ENCODE measurements at regions of chr5 and their contacts with region 1.

Region 1: DNA sequence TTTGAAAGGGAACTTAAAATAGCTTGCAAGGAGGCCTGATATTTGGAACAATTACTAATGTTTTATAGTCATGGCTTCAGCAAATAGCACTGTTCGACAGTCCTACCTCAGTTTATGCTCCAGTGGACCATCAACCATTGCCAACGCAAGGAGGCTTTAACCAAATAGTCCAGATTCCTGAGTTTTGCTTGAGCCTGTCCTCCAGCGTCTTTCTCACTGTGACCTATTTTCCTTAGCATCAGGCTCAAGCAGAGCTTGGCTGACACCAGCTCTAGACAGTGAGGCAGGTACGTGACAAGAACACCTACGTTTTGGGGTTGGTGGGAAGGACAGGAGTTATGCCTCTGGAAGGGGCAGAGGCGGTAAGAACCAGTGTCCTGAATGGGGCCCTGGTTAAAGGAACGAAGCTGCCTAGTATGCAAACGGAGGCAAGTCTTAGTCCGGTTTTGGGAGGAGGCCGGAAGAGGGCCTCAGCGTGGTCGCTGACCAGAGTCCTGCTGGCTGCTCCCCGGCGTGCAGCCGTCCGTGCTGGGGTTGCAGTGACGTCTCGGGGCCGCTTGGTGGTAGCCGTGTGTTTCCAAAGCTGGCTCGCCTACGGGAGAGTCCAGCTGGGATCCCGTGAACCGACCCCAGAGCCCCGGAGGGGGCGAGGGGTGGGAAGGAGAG is 998 bp upstream of the FGF18 start:
- DNase-seq: peak; percentile 42
- ATAC-seq: peak; percentile 67
- H3K4me3 Mint-ChIP-seq: peak overlapping the region; percentile 71
- H3K27ac Mint-ChIP-seq: no peak overlapping the region
- H3K4me1 Mint-ChIP-seq: peaks cover 20% of the 10 kb centered on the region
- H3K27me3 Mint-ChIP-seq: peaks cover 20% of the 10 kb centered on the region
- CTCF ChIP-seq: peak; percentile 49

Region 2: DNA sequence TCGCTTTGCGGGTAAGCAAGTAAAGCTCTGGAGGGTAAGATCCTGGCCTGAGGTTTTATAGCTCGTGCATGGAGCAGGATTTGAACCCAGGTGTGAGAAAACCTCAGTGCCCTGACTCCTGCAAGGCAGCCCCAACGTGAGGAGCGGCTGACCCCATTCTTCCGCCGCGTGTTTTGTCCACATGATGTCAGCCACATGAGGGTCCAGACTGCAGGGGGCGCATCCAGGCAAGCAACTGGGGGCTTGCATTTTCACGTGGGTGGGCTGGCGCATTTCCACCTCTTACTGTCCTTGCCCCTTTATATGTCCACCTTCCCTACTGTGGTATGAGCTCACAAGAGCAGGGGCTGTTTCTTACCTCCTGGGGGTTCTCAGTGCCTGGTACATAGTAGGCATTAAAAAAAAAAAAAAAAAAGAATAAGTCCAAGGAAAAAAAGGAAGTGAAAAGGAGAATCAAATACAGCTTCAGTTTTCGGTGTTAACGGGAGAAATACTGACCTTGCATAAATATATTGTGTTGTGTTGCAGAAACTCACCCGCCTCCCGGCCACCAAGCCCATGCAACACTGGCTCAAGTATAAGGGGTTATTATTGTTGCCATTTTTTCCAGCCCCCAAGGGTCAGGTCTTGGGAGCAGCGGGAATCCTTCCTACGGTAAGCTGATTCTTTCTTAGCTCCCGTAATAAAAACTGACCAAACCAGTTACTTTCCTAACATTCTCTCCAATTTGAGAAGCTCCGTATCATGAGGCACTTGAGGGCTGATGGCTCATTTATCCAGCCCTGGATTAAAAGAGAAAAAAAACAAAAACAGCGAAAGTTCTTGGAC is 94.4 kb before region 1 on chr5:
- CTCF ChIA-PET with region 1: no interaction called
- POLR2A ChIA-PET with region 1: no interaction called
- intact Hi-C with region 1: no loop called
- DNase-seq: no peak
- ATAC-seq: no peak
- H3K4me3 Mint-ChIP-seq: no peak overlapping the region
- H3K27ac Mint-ChIP-seq: no peak overlapping the region
- H3K4me1 Mint-ChIP-seq: no peaks in the 10 kb centered on the region
- H3K27me3 Mint-ChIP-seq: peaks cover 52% of the 10 kb centered on the region
- CTCF ChIP-seq: no peak

Region 3: DNA sequence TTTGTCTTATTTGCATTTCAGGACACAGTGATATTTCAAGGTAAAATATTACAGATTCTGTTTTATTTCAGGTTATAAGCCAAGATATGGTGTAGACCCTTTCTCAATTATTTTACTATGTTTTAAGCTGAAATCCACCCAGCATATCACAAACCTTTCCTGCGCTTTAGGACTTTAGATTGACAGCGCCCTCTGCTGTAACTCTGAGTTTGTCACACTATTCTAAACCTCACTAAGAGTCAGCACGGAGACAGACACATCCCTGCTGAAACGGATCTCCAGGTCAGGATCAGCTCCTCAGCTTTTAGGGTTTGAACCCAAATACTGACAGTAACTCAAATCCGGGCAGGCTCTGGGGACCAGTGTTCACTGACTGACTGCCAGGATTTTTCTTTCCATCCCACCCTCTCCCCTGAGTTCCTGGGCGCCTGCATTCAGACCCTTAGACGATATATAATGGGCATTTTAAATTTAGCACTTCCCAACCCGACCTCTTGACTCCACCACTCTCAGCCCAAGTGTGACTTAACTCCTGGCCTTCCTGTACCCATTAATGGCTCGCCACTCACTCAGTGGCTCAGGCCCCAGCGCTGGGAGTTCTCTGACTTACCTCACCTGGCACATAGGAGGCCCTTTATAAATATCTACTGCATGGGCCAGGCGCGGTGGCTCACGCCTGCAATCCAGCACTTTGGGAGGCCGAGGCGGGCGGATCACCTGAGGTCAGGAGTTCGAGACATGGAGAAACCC is 75.9 kb before region 1 on chr5:
- CTCF ChIA-PET with region 1: no interaction called
- POLR2A ChIA-PET with region 1: no interaction called
- intact Hi-C with region 1: no loop called
- DNase-seq: no peak
- ATAC-seq: no peak
- H3K4me3 Mint-ChIP-seq: no peak overlapping the region
- H3K27ac Mint-ChIP-seq: no peak overlapping the region
- H3K4me1 Mint-ChIP-seq: no peaks in the 10 kb centered on the region
- H3K27me3 Mint-ChIP-seq: peaks cover 13% of the 10 kb centered on the region
- CTCF ChIP-seq: no peak

Region 4: GRCh38 chr5:171445644-171446516 is 27.4 kb after region 1 on chr5:
- CTCF ChIA-PET with region 1: no interaction called
- POLR2A ChIA-PET with region 1: no interaction called
- intact Hi-C with region 1: no loop called
- DNase-seq: no peak
- ATAC-seq: no peak
- H3K4me3 Mint-ChIP-seq: no peak overlapping the region
- H3K27ac Mint-ChIP-seq: no peak overlapping the region
- H3K4me1 Mint-ChIP-seq: no peaks in the 10 kb centered on the region
- H3K27me3 Mint-ChIP-seq: peaks cover 27% of the 10 kb centered on the region
- CTCF ChIP-seq: no peak

Region 5: DNA sequence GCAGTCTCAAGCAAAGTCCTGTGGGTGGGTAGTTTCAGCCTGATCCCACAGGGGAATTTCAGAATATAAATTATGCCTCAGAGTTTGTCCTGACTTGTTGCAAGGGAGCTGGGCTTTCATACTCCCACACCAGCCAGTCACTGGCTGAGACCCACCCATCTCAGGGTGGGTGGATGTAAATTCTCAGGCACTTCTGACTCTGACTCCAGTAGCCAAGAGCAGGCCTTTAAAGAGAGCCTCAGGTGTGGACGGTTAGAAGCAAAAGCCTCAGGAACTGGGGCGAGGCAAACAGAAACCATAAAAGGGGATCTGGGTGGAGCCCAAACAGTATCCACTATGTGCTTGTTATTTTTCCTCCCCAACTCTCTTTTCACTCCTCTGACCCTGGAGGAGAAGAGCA is 616.6 kb after region 1 on chr5:
- CTCF ChIA-PET with region 1: no interaction called
- POLR2A ChIA-PET with region 1: no interaction called
- intact Hi-C with region 1: loop called (anchors 2 kb)
- DNase-seq: no peak
- ATAC-seq: peak; percentile 62
- H3K4me3 Mint-ChIP-seq: no peak overlapping the region
- H3K27ac Mint-ChIP-seq: peak overlapping the region; percentile 18
- H3K4me1 Mint-ChIP-seq: peaks cover 16% of the 10 kb centered on the region
- H3K27me3 Mint-ChIP-seq: no peaks in the 10 kb centered on the region
- CTCF ChIP-seq: no peak

Measured in activated B cell treated with CpG ODN at 0.5 μM for 24 hours (primary cell).